ENCODE measurements at regions of chr18 and their contacts with region 1.

Region 1: DNA sequence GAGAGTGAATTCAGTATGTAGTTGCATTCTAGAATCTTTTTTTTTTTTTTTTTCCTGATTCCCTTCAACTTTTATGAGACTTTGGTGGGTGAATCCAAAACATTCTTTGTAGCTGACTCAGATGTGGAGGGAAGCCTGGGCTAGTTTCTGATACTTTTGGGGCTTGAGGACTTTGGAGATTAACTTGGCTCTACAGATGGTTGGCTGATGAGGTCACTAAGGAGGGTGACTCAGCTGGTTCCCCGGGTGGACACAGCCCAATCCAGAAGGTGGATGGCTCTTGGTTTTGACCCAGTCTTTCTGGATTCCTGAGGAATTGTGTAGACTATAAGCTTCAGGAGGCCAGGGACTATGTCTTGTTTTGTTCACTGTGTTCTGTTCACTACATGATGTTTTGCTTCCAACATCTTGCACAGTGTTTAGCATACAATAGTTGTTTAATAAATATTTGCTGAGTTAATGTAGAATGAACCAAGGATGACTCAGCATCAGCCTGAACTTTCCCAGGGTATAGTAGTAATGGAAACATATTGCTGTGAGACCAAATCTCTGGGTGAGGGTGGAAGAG is 30.5 kb downstream of the LAMA3 start:
- DNase-seq: peak in 1 of 5 donors; percentile 48
- ATAC-seq: peak in 3 of 4 donors; percentile 53 to 92 (median 54)
- H3K4me3 ChIP-seq: no peak overlapping the region
- H3K27ac ChIP-seq: no peak overlapping the region
- H3K4me1 ChIP-seq: peaks cover 0 to 14% (median 3%) of the 10 kb centered on the region in 12 donors
- H3K27me3 ChIP-seq: no peaks in the 10 kb centered on the region
- CTCF ChIP-seq: no peak
- POLR2A ChIP-seq: no peak

Region 2: DNA sequence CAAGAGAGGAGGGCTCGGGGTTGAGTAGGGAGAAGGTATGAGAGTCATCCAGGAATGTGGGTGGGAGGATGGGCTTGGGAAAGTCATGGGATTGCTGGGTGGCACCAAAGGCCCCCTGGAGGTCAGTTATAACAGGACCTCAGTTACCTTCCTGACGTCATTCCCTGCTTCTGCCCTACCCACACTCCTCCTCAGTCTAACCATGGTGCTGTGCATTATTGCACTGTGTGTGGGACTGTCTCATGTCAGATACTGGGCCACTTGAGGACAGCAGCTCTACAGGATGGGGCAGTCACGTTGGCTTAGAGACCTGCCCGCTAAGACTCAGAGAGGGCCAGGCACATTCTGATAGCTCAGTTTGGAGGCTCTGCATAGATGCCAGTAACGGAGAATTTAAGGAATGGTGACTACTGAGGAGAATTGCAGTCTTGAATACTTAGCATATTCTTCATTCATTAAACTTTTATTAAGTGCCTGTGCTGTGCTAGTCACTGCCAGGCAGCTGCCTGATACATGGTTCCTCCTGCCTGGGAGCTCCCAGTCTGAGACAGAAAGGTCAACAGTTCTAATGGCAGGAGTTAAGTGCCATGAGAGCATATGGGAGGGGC is 60.1 kb after region 1 on chr18:
- intact Hi-C with region 1: loop called in 2 of 10 experiments (anchors 10 kb)
- DNase-seq: no peak
- ATAC-seq: peak; percentile 42 to 80 (median 56)
- H3K4me3 ChIP-seq: no peak overlapping the region
- H3K27ac ChIP-seq: no peak overlapping the region
- H3K4me1 ChIP-seq: peaks cover 0 to 6% (median 0%) of the 10 kb centered on the region in 12 donors
- H3K27me3 ChIP-seq: no peaks in the 10 kb centered on the region
- CTCF ChIP-seq: no peak
- POLR2A ChIP-seq: no peak

Measured in heart left ventricle (tissue), 16 donors.